A549 (cell line): ENCODE measurements at regions of chr16 and their contacts with region 1.

Region 1: DNA sequence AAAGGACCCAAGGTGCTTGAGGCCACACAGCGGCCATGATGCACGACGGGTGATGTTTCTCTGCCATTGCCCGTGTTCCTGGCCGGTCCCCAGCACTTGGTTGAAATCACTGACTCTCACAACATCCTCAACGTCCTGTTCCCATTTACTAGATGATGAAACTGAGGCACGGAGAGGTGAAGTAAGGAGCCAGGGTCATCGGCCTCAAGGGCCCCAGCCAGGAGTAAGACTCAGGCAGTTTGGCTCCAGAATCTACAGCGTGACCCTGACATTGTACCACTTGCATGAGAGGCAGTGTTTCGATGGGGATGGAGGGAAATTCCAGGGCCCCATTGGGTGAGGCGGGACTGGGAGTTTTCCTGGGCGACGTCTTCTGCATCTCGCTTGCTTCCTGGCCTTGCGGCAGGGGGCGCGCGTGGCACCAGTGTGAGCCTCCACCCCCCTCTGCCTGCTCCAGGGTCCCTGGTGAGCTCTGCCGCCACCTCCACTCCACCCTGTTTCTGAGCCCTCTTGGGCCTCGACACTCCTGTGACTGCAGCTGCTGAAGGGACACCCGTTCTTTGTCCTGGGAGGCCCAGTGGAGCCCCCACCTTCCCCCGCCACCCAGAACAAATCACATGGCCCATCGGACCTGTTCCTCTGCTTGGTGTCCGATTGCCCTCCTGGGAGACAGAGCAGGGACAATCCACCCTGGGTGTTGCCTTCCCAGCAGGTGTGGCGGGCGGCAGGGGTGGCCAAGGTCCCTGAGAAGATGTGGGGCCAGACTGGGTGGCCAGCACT is 133.0 kb upstream of the GSE1 start:
- DNase-seq: peak; percentile 67 to 94
- ATAC-seq: peak; percentile 89 to 95
- H3K4me3 ChIP-seq: no peak overlapping the region
- H3K27ac ChIP-seq: peak overlapping the region; percentile 18 to 70; a peak in 2 of 6 replicates
- H3K4me1 ChIP-seq: 0 out of 3 replicates have a peak, but pooled peaks cover 3% of the 10 kb centered on the region
- CTCF ChIP-seq: peak; percentile 73
- EP300 ChIP-seq: no peak
- POLR2A ChIP-seq: no peak
- RAD21 ChIP-seq: peak; percentile 65 to 76

Region 2: GRCh38 chr16:85461814-85462713 is 18.1 kb before region 1 on chr16:
- CTCF ChIA-PET with region 1: interaction called, 42 read pairs
- POLR2A ChIA-PET with region 1: no interaction called
- DNase-seq: no peak
- ATAC-seq: peak; percentile 27 to 61; a peak in 4 of 6 replicates
- H3K4me3 ChIP-seq: peak overlapping the region; percentile 37
- H3K27ac ChIP-seq: peak overlapping the region; percentile 13 to 87; a peak in 5 of 6 replicates
- H3K4me1 ChIP-seq: peaks cover 43% of the 10 kb centered on the region
- CTCF ChIP-seq: no peak
- EP300 ChIP-seq: no peak
- POLR2A ChIP-seq: no peak
- RAD21 ChIP-seq: no peak

Region 3: GRCh38 chr16:85505794-85506633 is 25.9 kb after region 1 on chr16:
- CTCF ChIA-PET with region 1: interaction called, 14 read pairs
- POLR2A ChIA-PET with region 1: no interaction called
- DNase-seq: no peak
- ATAC-seq: no peak
- H3K4me3 ChIP-seq: no peak overlapping the region
- H3K27ac ChIP-seq: no peak overlapping the region
- H3K4me1 ChIP-seq: no peaks in the 10 kb centered on the region
- CTCF ChIP-seq: no peak
- EP300 ChIP-seq: no peak
- POLR2A ChIP-seq: no peak
- RAD21 ChIP-seq: no peak

Region 4: GRCh38 chr16:85514595-85515318 is 34.6 kb after region 1 on chr16:
- CTCF ChIA-PET with region 1: interaction called, 14 read pairs
- POLR2A ChIA-PET with region 1: no interaction called
- DNase-seq: peak; percentile 92 to 95
- ATAC-seq: peak; percentile 85 to 89
- H3K4me3 ChIP-seq: peak overlapping the region; percentile 24; the same call in 2 of the 3 replicates
- H3K27ac ChIP-seq: peak overlapping the region; percentile 95 to 97
- H3K4me1 ChIP-seq: peaks cover 36% of the 10 kb centered on the region
- CTCF ChIP-seq: no peak
- EP300 ChIP-seq: peak; percentile 28 to 78; a peak in 2 of 5 replicates
- POLR2A ChIP-seq: 0 out of 2 replicates have a peak, but pooled peaks have one; percentile 14
- RAD21 ChIP-seq: peak in 1 of 2 experiments; percentile 45; a peak in 2 of 5 replicates